ENCODE measurements at regions of chr4 and their contacts with region 1.

Region 1: GRCh38 chr4:148441986-148442831 is at the start of gene NR3C2:
- DNase-seq: peak; percentile 93
- H3K4me3 Mint-ChIP-seq: peak within 1 kb of the TSS; percentile 96
- H3K27ac Mint-ChIP-seq: peak within 1 kb of the TSS; percentile 70
- H3K4me1 Mint-ChIP-seq: peaks cover 18% of the 10 kb centered on the region
- H3K27me3 Mint-ChIP-seq: no peaks in the 10 kb centered on the region
- CTCF ChIP-seq: no peak
- total RNA-seq, gene NR3C2: 14.2 and 14.5 TPM in 2 replicates

Region 2: GRCh38 chr4:148056869-148057268 is 385.3 kb before region 1 on chr4:
- CTCF ChIA-PET with region 1: interaction called, 3 read pairs
- intact Hi-C with region 1: loop called (anchors 5 kb)
- DNase-seq: peak; percentile 28
- H3K4me3 Mint-ChIP-seq: no peak overlapping the region
- H3K27ac Mint-ChIP-seq: no peak overlapping the region
- H3K4me1 Mint-ChIP-seq: peaks cover 32% of the 10 kb centered on the region
- H3K27me3 Mint-ChIP-seq: no peaks in the 10 kb centered on the region
- CTCF ChIP-seq: no peak

Region 3: DNA sequence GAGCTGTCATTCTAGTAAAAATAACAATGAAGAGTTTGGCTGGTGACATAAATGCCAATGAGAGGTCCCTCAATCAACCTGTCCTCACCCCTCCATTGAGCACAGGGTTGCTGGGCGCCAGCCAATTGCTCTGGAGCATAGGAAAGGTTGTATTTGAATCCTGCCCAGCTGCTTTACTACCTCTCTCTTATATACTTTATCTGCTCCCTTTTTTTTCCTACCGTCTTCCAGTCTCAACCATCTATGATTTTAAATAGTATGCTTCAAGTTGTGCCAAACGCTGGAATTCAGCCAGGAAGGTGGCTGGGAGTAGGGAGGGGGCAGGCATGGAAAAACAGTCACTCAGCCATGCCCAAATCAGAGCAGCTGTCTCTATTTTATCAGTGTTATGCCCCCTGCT is 153.8 kb before region 1 on chr4:
- CTCF ChIA-PET with region 1: no interaction called
- intact Hi-C with region 1: loop called (anchors 5 kb)
- DNase-seq: no peak
- H3K4me3 Mint-ChIP-seq: no peak overlapping the region
- H3K27ac Mint-ChIP-seq: no peak overlapping the region
- H3K4me1 Mint-ChIP-seq: no peaks in the 10 kb centered on the region
- H3K27me3 Mint-ChIP-seq: no peaks in the 10 kb centered on the region
- CTCF ChIP-seq: no peak

Region 4: DNA sequence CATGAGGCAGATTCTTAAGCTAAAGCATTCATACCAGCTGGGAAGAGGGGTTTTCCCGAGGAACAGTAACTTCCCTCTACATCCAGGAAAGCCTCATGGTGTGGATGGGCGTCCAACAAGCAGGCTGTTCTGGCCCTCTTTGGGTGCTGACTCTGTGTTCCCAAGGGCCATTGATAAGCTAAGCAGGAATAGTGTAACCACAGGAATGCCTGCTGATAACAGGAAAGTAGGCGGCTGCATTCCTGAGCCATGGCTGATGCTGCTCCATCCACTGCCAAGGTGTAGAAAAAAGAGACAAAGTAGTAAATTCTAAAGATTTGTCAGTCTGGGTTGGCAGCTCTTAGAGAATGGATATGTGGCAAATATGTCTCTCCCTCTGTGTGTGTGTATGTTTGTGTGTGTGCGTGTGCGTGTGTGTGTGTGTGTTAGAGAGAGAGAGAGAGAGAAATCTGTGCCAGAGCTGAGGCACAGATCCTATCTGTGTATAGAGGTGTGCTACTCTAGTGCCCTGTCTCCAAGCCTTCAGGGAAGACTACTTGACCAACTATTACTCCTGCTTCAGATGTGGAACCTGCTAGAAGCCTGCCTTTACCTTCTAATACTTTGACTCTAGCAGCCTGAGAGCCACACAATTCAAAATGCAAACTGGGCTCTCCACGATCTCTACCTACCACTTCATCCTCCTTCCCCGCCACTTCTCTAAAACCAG is 353.1 kb after region 1 on chr4:
- CTCF ChIA-PET with region 1: interaction called, 3 read pairs
- intact Hi-C with region 1: loop called (anchors 5 kb)
- DNase-seq: peak; percentile 66
- H3K4me3 Mint-ChIP-seq: peak overlapping the region; percentile 3
- H3K27ac Mint-ChIP-seq: peak overlapping the region; percentile 45
- H3K4me1 Mint-ChIP-seq: peaks cover 45% of the 10 kb centered on the region
- H3K27me3 Mint-ChIP-seq: no peaks in the 10 kb centered on the region
- CTCF ChIP-seq: no peak

Region 5: GRCh38 chr4:148852092-148852699 is 410.0 kb after region 1 on chr4:
- CTCF ChIA-PET with region 1: interaction called, 3 read pairs
- intact Hi-C with region 1: loop called (anchors 2 kb)
- DNase-seq: peak; percentile 31
- H3K4me3 Mint-ChIP-seq: no peak overlapping the region
- H3K27ac Mint-ChIP-seq: peak overlapping the region; percentile 66
- H3K4me1 Mint-ChIP-seq: peaks cover 49% of the 10 kb centered on the region
- H3K27me3 Mint-ChIP-seq: no peaks in the 10 kb centered on the region
- CTCF ChIP-seq: no peak

Region 6: GRCh38 chr4:149264093-149264733 is 822.0 kb after region 1 on chr4:
- CTCF ChIA-PET with region 1: no interaction called
- intact Hi-C with region 1: loop called (anchors 10 kb)
- DNase-seq: peak; percentile 30
- H3K4me3 Mint-ChIP-seq: no peak overlapping the region
- H3K27ac Mint-ChIP-seq: no peak overlapping the region
- H3K4me1 Mint-ChIP-seq: no peaks in the 10 kb centered on the region
- H3K27me3 Mint-ChIP-seq: no peaks in the 10 kb centered on the region
- CTCF ChIP-seq: no peak